Adrenal gland (tissue), 19 donors: ENCODE measurements at regions of chr22 and their contacts with region 1.

Region 1: DNA sequence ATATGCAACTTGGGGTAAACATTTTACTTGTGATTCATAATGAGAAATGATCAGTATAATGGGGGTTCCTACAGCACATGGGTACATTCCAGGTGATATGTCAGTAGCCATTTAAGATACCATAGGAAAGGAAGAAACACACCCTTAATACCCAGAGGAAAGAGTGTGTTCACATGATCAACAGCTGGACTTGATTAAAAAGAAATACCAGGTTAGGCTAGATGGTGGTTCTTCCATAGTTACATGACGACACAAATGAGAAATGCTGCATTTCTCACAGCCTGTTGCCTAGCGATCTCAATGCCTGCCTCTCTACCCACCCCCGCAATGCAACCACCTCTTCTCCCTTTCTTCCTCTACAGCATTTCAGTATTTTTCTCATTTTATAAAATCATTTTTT is 96.8 kb downstream of the TTC28 start:
- DNase-seq: no peak
- H3K4me3 ChIP-seq: no peak overlapping the region
- H3K27ac ChIP-seq: no peak overlapping the region
- H3K4me1 ChIP-seq: no peaks in the 10 kb centered on the region
- H3K27me3 ChIP-seq: no peaks in the 10 kb centered on the region
- CTCF ChIP-seq: no peak
- POLR2A ChIP-seq: no peak

Region 2: GRCh38 chr22:28019881-28020871 is 562.6 kb before region 1 on chr22:
- intact Hi-C with region 1: loop called in 1 of 2 experiments (anchors 10 kb)
- DNase-seq: peak; percentile 56 to 91 (median 79)
- H3K4me3 ChIP-seq: no peak overlapping the region
- H3K27ac ChIP-seq: peak overlapping the region in 2 of 5 donors; percentile 29 to 66
- H3K4me1 ChIP-seq: peaks cover 0 to 26% of the 10 kb centered on the region in 2 donors
- H3K27me3 ChIP-seq: no peaks in the 10 kb centered on the region
- CTCF ChIP-seq: peak; percentile 83 to 93 (median 89)
- POLR2A ChIP-seq: no peak